Common myeloid progenitor, CD34-positive (primary cell): ENCODE measurements at regions of chr6 and their contacts with region 1.

Region 1: DNA sequence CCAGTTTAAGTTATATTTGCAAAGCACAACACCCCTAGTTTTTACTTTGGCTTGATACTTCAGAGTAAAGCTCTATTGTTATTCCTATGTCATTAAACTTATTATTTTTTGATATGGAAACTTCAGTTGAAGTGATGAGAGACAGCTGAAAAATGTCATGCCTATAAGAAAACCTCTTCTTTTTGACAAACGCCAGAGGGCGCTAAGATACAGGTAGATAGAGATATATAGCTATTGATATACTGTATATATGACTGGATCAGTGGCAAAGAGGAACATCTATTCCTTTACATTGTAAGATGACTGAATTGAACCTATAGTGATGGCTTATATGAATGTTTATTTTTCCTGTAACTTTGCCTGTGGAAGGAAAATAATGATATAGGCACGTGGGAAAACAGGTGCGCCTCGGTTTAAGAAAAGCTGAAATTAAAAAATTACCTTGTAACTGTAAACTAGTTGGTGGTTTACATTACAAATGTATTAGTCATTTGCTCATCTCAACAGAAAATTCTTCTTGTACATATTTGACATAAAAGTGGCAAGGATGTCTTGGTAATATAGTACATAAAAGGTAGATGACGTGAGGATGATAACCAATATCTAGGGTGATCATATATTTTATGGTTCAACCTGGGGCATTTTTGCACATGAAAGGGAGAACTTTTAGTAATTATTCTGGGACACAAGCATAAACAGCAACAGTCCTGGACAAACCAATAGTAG is 74.1 kb downstream of the LAMA4 start:
- DNase-seq: peak; percentile 88 to 92 (median 90)
- H3K4me3 ChIP-seq: no peak overlapping the region
- H3K27ac ChIP-seq: no peak overlapping the region
- H3K4me1 ChIP-seq: peaks cover 0 to 2% (median 0%) of the 10 kb centered on the region in 4 experiments
- H3K27me3 ChIP-seq: peaks cover 0 to 10% (median 3%) of the 10 kb centered on the region in 5 experiments

Region 2: DNA sequence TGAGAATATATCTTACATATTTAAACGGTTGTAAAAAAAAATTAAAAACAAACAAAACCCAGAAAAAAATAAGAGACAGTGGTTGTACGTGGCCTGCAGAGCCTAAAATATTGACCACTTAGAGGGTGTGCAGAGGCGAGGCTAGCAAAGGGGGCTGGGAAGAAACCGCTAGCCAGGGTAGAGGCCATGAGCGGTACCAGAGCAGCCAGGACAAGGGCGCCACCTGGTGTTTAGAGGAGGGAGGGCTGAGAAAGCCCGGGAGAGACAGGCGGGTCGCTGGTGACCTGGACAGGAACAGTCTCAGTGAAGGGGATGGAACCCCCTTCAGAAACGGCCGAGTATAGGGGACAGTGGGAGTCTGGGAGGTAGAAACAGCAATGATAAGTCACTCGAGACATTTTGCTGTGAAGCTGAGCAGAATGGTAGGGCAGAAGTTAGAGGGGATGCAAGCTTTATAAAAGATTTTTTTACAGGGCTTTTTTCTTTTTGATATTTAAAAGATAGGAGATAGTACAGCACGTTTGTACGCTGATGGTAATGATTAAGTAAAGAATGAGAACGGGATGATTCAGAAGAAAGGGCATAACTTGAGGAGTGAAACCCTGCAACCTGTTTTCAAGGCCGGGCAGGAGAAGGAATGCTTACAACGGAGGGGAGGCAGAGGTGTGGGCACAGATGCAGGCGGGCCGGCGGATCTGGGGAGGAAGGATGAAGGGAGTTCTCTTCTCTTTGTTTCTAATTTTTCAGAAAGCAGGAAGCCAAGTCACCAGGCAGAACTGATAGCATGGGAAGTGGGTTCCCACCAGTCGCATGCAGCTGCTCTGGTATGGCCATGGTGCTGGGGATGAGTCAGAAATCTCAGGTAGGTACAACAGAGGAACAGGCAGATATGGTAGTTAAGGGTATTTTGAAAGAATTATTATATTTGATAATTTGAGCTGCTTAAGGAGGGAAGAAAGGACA is 16.7 kb before region 1 on chr6:
- CTCF ChIA-PET with region 1: interaction called, 12 read pairs
- POLR2A ChIA-PET with region 1: no interaction called
- DNase-seq: peak; percentile 57 to 89 (median 81)
- H3K4me3 ChIP-seq: peak overlapping the region in 5 of 7 experiments; percentile 16 to 68 (median 47)
- H3K27ac ChIP-seq: no peak overlapping the region
- H3K4me1 ChIP-seq: peaks cover 0 to 15% (median 12%) of the 10 kb centered on the region in 4 experiments
- H3K27me3 ChIP-seq: peaks cover 0 to 4% (median 0%) of the 10 kb centered on the region in 5 experiments

Region 3: DNA sequence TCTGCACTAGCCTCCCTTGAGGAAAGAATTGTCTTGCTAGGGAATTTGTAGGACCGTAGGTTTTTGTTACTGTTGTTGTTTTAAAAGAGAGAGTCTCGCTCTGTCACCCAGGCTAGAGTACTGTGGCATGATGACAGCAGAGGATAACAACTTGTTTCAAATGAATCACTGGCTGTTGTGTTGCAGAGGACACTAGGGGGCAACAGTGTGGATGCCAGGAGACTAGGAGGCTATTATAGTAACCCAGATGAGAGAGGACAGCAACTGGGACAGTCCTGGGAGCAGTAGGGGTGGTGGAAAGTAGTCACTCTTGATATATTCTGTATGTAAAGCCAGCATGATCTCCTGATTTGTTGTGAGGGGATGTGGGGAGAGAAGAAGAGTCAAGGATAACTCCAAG is 115.9 kb after region 1 on chr6:
- CTCF ChIA-PET with region 1: interaction called, 10 read pairs
- POLR2A ChIA-PET with region 1: no interaction called
- DNase-seq: peak in 2 of 3 donors; percentile 43 to 48
- H3K4me3 ChIP-seq: no peak overlapping the region
- H3K27ac ChIP-seq: no peak overlapping the region
- H3K4me1 ChIP-seq: no peaks in the 10 kb centered on the region
- H3K27me3 ChIP-seq: peaks cover 3 to 50% (median 8%) of the 10 kb centered on the region in 5 experiments

Region 4: DNA sequence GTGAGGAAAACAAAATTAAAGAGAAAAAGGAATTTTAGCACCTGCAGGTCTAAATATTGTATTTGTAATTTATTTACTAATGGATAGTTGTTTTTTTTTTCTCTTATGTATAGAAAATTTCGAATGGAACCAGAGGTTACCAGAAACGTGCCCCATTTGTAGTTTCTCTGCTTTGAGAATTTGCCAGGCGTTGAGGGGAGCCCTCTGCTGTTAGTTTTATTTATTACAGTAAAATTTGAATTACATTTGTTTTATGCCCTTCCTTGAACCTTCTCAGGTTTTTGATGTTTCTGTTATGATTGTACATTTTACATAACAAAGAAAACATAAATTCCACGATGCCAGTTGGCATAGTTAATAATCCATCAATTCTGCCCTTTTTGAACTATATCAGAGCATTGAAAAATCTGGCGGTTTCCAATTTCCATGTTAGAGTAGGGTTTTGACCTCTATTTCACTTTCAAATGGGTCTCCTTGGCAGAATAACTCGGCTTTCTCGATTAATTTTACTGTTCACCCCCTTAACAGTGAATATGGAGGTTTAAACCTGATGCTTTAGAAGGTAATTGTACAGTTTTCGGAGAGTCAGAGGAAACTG is 131.8 kb after region 1 on chr6:
- CTCF ChIA-PET with region 1: interaction called, 130 read pairs
- POLR2A ChIA-PET with region 1: no interaction called
- DNase-seq: peak; percentile 34 to 53 (median 36)
- H3K4me3 ChIP-seq: no peak overlapping the region
- H3K27ac ChIP-seq: no peak overlapping the region
- H3K4me1 ChIP-seq: no peaks in the 10 kb centered on the region
- H3K27me3 ChIP-seq: peaks cover 0 to 6% (median 0%) of the 10 kb centered on the region in 5 experiments

Region 5: GRCh38 chr6:112372226-112372806 is 192.1 kb after region 1 on chr6:
- CTCF ChIA-PET with region 1: interaction called, 17 read pairs
- POLR2A ChIA-PET with region 1: no interaction called
- DNase-seq: peak; percentile 12 to 25 (median 24)
- H3K4me3 ChIP-seq: no peak overlapping the region
- H3K27ac ChIP-seq: no peak overlapping the region
- H3K4me1 ChIP-seq: no peaks in the 10 kb centered on the region
- H3K27me3 ChIP-seq: peaks cover 3 to 36% (median 15%) of the 10 kb centered on the region in 5 experiments